ENCODE measurements at regions of chr14 and their contacts with region 1.

Region 1: DNA sequence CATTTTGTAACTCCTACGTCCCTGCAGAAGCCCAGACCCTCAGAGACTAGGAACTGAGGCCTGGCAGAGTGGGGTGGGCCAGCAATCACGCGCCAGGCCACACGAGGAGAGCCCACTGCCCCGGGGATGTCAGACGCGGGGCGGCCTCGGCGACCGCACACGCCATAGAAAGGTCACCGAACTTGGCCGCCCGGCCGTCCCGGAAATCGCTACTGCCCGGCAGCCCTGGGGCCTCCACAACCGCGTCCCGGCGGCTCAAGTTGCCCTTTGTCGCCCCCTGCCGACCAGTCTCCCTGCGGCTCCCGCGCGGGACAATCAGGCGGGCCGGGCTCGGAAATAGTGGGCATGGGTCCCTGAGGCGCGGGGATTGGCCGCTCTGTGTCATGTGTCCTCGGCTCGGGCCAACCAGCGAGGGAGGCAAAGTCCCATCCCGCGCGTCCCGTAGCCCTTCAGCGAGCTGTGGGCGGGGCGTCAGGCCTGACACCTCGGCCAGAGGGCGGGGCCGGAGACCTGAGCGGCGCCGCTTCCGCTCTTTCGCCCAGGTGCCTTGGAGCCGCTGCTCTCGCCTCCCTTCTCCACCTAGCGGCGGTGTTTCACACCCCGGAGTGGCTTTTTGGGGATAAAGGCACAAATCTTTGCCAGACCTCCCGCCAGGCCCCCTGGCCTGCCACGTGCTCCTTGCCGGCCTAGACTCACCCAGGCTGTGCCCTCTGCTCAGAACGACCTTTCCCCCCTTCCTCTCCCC is 33.4 kb upstream of the DEGS2 start:
- DNase-seq: peak; percentile 97 to 98 (median 97)
- ATAC-seq: peak; percentile 99
- H3K4me3 ChIP-seq: peak overlapping the region; percentile 20; the same call in 1 of the 2 replicates
- H3K27ac ChIP-seq: peak overlapping the region; percentile 95
- H3K4me1 ChIP-seq: peaks cover 15 to 17% of the 10 kb centered on the region in 2 experiments; a peak in 4 of 5 replicates
- H3K27me3 ChIP-seq: no peaks in the 10 kb centered on the region
- CTCF ChIP-seq: peak; percentile 81 to 84 (median 82)
- EP300 ChIP-seq: no peak
- POLR2A ChIP-seq: peak; percentile 57
- RAD21 ChIP-seq: peak; percentile 85 to 90

Region 2: GRCh38 chr14:99982537-99983250 is 210.2 kb before region 1 on chr14:
- CTCF ChIA-PET with region 1: interaction called, 11 read pairs
- POLR2A ChIA-PET with region 1: no interaction called
- in situ Hi-C with region 1: no loop called
- intact Hi-C with region 1: loop called (anchors 1 kb)
- DNase-seq: peak; percentile 57 to 75 (median 64)
- ATAC-seq: peak; percentile 95
- H3K4me3 ChIP-seq: no peak overlapping the region
- H3K27ac ChIP-seq: no peak overlapping the region
- H3K4me1 ChIP-seq: peaks cover 2 to 7% of the 10 kb centered on the region in 2 experiments; a peak in 3 of 5 replicates
- H3K27me3 ChIP-seq: no peaks in the 10 kb centered on the region
- CTCF ChIP-seq: peak; percentile 72 to 80 (median 75)
- EP300 ChIP-seq: no peak
- POLR2A ChIP-seq: no peak
- RAD21 ChIP-seq: peak; percentile 80 to 86

Region 3: DNA sequence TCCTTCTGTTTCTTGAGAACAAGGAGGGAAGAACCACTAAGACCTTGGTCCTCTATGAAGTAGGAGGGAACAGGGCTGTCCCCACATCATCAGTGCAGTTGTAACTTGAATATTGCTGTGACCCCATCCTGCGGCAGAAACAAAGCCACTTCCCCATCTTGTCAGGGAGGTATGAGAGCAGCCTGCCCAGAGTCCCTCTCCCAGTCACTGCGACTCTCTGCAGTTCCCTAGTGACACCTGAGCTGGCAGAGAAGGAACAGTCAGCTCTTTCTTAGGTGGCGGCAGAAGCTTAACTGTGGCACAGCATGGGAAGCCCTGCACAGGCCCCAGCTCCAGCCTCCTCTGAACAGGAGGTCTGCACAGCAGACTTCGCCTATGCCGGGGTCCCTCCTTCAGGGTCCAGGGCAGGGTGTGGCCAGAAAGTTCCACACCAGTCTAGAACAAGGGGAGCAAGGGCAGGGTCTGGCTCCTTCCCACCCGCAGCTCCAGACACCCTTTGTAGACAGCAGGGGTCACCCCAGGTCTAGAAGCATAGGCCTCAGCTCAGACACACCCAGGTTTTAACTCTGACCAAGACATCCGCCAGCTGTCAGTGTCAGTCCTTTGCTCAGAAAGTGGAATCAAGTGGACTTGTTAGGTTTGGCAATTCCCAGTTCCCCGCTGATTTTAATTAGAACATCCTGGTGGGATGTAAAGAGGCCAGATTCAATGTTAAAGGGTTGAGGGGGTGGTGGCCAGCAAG is 70.2 kb before region 1 on chr14:
- CTCF ChIA-PET with region 1: interaction called, 3 read pairs
- POLR2A ChIA-PET with region 1: no interaction called
- in situ Hi-C with region 1: no loop called
- intact Hi-C with region 1: loop called (anchors 2 kb)
- DNase-seq: peak in 3 of 4 experiments; percentile 29 to 35 (median 33)
- ATAC-seq: peak; percentile 87
- H3K4me3 ChIP-seq: no peak overlapping the region
- H3K27ac ChIP-seq: no peak overlapping the region
- H3K4me1 ChIP-seq: no peaks in the 10 kb centered on the region; a peak in 1 of 5 replicates
- H3K27me3 ChIP-seq: no peaks in the 10 kb centered on the region
- CTCF ChIP-seq: peak; percentile 43 to 51 (median 48)
- EP300 ChIP-seq: no peak
- POLR2A ChIP-seq: no peak
- RAD21 ChIP-seq: peak; percentile 24 to 46; a peak in 3 of 4 replicates

Region 4: GRCh38 chr14:100239840-100240724 is 47.2 kb after region 1 on chr14:
- CTCF ChIA-PET with region 1: interaction called, 9 read pairs
- POLR2A ChIA-PET with region 1: interaction called, 4 read pairs
- in situ Hi-C with region 1: no loop called
- intact Hi-C with region 1: loop called (anchors 5 kb)
- DNase-seq: peak; percentile 63 to 85 (median 74)
- ATAC-seq: peak; percentile 53
- H3K4me3 ChIP-seq: peak overlapping the region; percentile 96
- H3K27ac ChIP-seq: peak overlapping the region; percentile 98
- H3K4me1 ChIP-seq: peaks cover 13 to 16% of the 10 kb centered on the region in 2 experiments; a peak in 4 of 5 replicates
- H3K27me3 ChIP-seq: no peaks in the 10 kb centered on the region
- CTCF ChIP-seq: peak in 2 of 3 experiments; percentile 37 to 67; a peak in 4 of 6 replicates
- EP300 ChIP-seq: no peak
- POLR2A ChIP-seq: no peak
- RAD21 ChIP-seq: no peak

Measured in K562 (cell line).